ENCODE measurements at regions of chr2 and their contacts with region 1.

Region 1: DNA sequence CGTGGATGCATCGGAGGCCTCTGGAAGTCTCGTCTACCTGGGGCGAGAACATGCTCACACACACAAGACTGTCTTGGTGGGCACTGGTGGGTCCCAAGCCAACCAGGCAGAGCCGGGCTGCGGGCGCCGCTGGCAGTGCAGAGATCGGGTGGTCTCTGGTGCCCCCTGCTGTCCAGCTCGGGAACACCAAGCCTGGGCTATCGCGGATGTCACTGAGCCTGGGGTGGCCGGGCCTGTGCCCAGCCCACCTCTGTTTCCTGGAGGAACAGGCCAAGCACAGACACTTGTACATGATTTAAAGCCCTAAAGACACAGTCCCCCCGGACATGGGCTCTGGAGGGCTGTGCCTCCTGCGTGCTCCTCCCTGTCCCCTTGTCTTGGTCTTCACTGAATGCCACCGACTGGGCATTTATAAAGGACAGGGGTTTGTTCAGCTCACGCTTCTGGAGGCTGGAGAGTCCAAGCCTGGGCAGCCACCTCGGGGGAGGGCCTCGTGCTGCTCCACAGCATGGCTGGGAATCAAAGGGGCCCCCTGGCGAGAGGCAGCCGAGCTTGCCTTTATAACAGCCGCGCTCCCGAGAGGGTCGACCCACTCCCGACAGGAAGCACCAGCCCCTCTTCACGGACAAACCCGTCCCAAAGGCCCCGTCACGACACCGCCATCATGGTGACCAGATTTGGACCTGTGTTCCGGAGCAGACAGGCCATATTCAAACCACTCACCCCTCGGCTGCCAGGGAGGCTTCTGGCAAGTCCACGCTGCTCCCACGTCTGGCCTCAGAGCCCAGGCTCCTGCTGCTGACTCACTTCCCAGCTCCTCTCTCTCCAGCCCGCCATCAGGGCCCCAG is 3.6 kb upstream of the OTOS start:
- DNase-seq: peak; percentile 83
- H3K4me3 Mint-ChIP-seq: no peak overlapping the region
- H3K27ac Mint-ChIP-seq: no peak overlapping the region
- H3K4me1 Mint-ChIP-seq: no peaks in the 10 kb centered on the region
- H3K27me3 Mint-ChIP-seq: peaks cover 4% of the 10 kb centered on the region

Region 2: GRCh38 chr2:240066487-240066886 is 77.5 kb before region 1 on chr2:
- CTCF ChIA-PET with region 1: interaction called, 115 read pairs
- intact Hi-C with region 1: loop called (anchors 1 kb)
- DNase-seq: no peak
- H3K4me3 Mint-ChIP-seq: no peak overlapping the region
- H3K27ac Mint-ChIP-seq: no peak overlapping the region
- H3K4me1 Mint-ChIP-seq: no peaks in the 10 kb centered on the region
- H3K27me3 Mint-ChIP-seq: peaks cover 19% of the 10 kb centered on the region

Measured in activated naive CD4-positive, alpha-beta T cell treated with anti-CD3 and anti-CD28 coated beads for 36 hours (primary cell).